ENCODE measurements at regions of chr4 and their contacts with region 1.

Region 1: DNA sequence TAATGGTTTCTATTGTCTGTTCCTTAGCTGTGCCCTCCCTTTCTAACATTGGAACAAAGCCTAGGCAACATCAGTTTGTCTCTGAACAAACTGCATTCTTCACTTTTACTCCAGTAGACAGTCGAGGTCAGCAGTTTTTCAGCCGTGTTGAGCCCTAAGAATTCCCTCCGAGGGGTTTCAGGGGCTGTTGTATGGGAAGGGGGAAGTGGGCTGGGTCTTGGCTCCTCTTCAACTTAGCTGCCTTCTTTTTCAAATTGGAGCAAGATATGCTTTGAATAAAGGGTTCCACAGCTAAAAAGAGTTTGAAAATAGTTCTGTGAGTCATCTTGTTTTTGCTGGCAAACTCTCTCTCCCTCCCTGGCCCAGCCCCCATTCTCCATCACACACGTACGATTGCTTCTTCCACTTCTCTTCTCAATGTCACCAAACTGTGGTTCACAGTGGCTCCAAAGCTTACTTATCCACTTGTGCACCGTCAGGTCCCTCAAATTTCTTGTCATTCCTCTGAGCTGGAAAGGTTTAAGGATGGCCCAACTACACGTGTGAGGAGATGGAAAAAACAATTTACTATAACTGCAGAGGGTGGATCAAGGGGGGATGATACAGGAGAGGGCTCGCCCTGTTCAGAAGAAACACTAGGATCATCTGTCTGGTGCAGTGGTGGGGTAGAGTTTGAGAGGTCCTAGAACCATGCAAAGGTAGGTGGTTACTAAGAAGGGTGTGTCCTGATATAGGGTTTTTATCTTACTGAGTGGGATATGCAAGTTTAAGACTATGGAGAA is 9.2 kb upstream of the MAML3 start:
- DNase-seq: no peak
- H3K4me3 ChIP-seq: no peak overlapping the region
- H3K27ac ChIP-seq: no peak overlapping the region
- H3K4me1 ChIP-seq: no peaks in the 10 kb centered on the region
- H3K27me3 ChIP-seq: no peaks in the 10 kb centered on the region
- CTCF ChIP-seq: no peak

Region 2: GRCh38 chr4:139458999-139459398 is 704.2 kb before region 1 on chr4:
- CTCF ChIA-PET with region 1: interaction called, 13 read pairs
- POLR2A ChIA-PET with region 1: no interaction called
- intact Hi-C with region 1: no loop called
- DNase-seq: peak in 1 of 2 experiments; percentile 41
- H3K4me3 ChIP-seq: no peak overlapping the region
- H3K27ac ChIP-seq: no peak overlapping the region
- H3K4me1 ChIP-seq: peaks cover 35% of the 10 kb centered on the region
- H3K27me3 ChIP-seq: no peaks in the 10 kb centered on the region
- CTCF ChIP-seq: no peak

Region 3: GRCh38 chr4:140176735-140177134 is 13.5 kb after region 1 on chr4:
- CTCF ChIA-PET with region 1: no interaction called
- POLR2A ChIA-PET with region 1: interaction called, 15 read pairs
- intact Hi-C with region 1: no loop called
- DNase-seq: peak; percentile 24 to 44
- H3K4me3 ChIP-seq: no peak overlapping the region
- H3K27ac ChIP-seq: no peak overlapping the region
- H3K4me1 ChIP-seq: 0 out of 2 replicates have a peak, but pooled peaks cover 5% of the 10 kb centered on the region
- H3K27me3 ChIP-seq: no peaks in the 10 kb centered on the region
- CTCF ChIP-seq: no peak

Measured in PC-9 (cell line).